ENCODE measurements at regions of chr1 and their contacts with region 1.

Region 1: DNA sequence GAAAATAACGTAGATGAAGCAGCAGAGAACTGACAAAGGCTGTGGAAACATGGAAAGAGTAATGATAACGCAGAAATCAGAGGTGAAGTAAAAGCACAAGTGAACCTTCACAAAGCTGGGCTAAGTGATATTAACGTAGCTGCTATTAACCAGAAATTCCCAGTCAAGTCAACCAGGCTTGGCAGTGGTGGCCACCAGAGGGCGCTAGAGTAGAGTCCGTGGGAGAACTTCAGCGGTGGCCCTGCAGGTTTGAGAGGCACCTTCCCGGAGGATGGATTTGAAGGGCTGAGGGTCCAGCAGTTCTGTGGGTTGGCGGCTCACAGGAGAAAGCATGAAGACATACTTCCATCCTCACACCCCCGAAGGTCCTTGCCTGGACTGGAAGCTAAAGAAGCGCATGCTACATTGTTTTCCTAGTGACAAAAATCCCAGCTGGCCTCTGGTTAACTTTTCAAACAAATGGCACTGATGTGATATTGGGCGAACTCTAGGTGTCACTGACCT is 81.7 kb upstream of the ZNF648 start:
- DNase-seq: peak; percentile 89
- ATAC-seq: peak; percentile 80
- H3K4me3 Mint-ChIP-seq: no peak overlapping the region
- H3K27ac Mint-ChIP-seq: no peak overlapping the region
- H3K4me1 Mint-ChIP-seq: peaks cover 26% of the 10 kb centered on the region
- H3K27me3 Mint-ChIP-seq: peaks cover 5% of the 10 kb centered on the region

Region 2: GRCh38 chr1:181969902-181970301 is 173.3 kb before region 1 on chr1:
- CTCF ChIA-PET with region 1: no interaction called
- POLR2A ChIA-PET with region 1: no interaction called
- DNase-seq: no peak
- ATAC-seq: no peak
- H3K4me3 Mint-ChIP-seq: no peak overlapping the region
- H3K27ac Mint-ChIP-seq: no peak overlapping the region
- H3K4me1 Mint-ChIP-seq: no peaks in the 10 kb centered on the region
- H3K27me3 Mint-ChIP-seq: peaks cover 2% of the 10 kb centered on the region

Region 3: DNA sequence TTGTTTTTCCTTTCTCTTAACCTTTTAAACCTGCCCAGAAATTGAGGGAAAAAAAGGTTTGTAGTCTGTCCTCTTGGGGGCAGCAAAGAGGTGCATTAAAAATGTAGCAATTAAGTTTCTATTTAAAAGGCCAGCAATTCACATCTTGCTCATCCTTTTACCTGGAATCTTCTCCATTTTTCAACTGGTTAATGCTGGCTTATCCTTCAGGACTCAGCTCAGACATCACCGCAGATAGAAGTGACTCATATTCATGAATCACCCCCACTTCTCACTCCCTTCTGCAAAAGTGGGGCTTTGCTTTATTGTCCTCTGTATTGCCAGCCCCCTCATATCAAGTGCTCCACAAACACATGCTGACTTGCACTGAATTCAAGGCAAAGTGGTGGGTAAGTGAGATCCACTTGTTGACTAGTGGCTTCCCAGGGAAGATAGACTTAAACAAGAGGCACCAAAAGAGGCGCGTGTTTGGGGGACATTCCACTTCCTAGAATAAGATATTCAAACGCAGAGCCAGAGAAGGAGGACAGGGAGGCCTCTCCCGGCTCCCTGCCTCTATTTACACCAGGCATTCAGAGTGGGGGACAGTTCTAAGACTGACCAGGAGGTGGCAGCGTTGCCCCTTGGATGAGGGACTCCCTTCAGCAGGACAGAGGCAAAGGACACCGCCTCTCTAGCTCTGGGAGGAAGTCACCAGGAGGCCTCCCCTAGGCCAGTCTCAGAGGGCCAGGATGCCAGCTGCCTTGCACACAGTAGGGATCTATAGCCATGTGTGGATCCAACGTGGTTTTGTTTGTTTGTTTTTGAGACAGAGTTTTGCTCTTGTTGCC is 58.5 kb before region 1 on chr1:
- CTCF ChIA-PET with region 1: interaction called, 50 read pairs
- POLR2A ChIA-PET with region 1: no interaction called
- DNase-seq: peak; percentile 89
- ATAC-seq: peak; percentile 86
- H3K4me3 Mint-ChIP-seq: no peak overlapping the region
- H3K27ac Mint-ChIP-seq: peak overlapping the region; percentile 70
- H3K4me1 Mint-ChIP-seq: peaks cover 54% of the 10 kb centered on the region
- H3K27me3 Mint-ChIP-seq: no peaks in the 10 kb centered on the region

Region 4: DNA sequence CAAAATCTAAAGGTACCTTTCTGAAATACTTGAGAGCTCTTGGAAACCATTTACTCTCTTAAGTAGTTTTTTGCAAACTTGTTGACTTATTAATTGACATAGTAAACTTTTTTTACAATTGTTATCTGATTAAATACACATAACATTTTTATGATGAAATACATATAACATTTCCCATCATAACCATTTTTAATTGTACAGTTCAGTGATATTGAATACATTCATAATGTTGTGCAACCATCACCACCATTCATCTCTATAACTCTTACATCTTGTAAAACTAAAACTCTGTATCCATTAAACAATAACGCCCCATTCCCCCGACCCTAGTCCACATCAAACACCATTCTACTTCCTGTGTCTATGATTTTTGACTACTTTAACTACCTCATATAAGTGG is 14.0 kb after region 1 on chr1:
- CTCF ChIA-PET with region 1: interaction called, 22 read pairs
- POLR2A ChIA-PET with region 1: no interaction called
- DNase-seq: no peak
- ATAC-seq: no peak
- H3K4me3 Mint-ChIP-seq: no peak overlapping the region
- H3K27ac Mint-ChIP-seq: no peak overlapping the region
- H3K4me1 Mint-ChIP-seq: peaks cover 15% of the 10 kb centered on the region
- H3K27me3 Mint-ChIP-seq: peaks cover 6% of the 10 kb centered on the region

Region 5: DNA sequence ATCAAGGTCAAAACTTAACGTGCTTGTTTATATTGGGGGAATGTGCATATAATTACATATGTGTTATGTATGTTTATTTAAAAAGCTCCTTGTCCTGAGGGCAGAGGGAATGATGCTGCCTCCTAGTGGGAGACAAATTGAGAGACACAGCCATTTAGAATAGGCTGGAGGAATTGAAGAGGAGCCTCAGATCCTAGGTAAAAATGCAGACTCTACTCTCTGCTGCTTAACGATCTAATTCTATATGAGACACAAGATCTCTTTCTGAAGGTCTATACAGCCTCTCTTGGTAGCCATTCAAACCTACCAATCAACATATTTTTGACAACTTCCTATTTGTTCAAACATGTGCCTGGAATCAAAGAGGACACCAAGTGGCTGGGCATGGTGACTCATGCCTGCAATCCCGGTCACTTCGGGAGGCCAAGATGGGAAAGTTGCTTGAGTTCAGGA is 54.9 kb after region 1 on chr1:
- CTCF ChIA-PET with region 1: interaction called, 10 read pairs
- POLR2A ChIA-PET with region 1: no interaction called
- DNase-seq: no peak
- ATAC-seq: no peak
- H3K4me3 Mint-ChIP-seq: no peak overlapping the region
- H3K27ac Mint-ChIP-seq: no peak overlapping the region
- H3K4me1 Mint-ChIP-seq: no peaks in the 10 kb centered on the region
- H3K27me3 Mint-ChIP-seq: peaks cover 3% of the 10 kb centered on the region

Region 6: GRCh38 chr1:182291584-182292192 is 148.5 kb after region 1 on chr1:
- CTCF ChIA-PET with region 1: interaction called, 10 read pairs
- POLR2A ChIA-PET with region 1: no interaction called
- DNase-seq: no peak
- ATAC-seq: no peak
- H3K4me3 Mint-ChIP-seq: no peak overlapping the region
- H3K27ac Mint-ChIP-seq: no peak overlapping the region
- H3K4me1 Mint-ChIP-seq: peaks cover 9% of the 10 kb centered on the region
- H3K27me3 Mint-ChIP-seq: no peaks in the 10 kb centered on the region

Region 7: DNA sequence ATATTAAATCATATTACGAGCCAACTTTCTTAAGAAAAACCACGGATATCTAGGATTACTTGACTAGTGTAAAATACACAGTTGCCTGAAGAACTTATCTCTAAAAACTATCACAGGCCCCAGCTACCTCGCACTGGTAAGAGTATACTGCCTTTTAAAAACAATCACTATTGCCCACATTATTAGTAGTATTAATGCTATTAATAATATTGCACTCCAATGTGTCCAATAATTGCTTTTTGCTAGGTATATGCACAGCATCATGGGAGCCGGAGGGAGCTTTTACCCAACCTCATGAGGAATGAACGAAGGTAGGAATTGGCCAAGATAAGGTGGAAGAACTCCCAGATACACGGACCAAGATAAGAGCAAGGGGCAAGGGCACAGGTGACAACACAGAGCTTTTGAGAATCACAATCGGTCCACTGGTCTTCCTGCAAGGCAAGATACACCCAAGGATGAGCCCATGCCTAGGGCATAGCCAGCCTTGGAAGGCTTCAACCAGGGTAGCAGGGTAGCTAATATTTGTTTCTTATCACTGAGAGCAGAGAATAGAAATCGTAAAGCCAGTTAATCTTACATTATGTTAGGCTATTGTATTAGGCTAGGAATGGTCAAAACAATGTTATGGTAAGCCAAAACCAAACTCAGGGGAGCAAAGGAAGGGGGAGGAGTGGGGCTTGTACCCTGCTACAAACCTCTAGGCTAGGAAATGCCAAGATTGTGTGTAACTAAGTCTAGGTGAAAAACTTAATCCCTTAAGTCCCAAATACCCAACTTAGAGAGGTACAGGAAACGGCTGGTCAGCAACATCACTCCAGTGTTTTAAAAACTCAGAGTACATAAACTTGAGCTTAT is 239.0 kb after region 1 on chr1:
- CTCF ChIA-PET with region 1: interaction called, 34 read pairs
- POLR2A ChIA-PET with region 1: no interaction called
- DNase-seq: no peak
- ATAC-seq: no peak
- H3K4me3 Mint-ChIP-seq: no peak overlapping the region
- H3K27ac Mint-ChIP-seq: no peak overlapping the region
- H3K4me1 Mint-ChIP-seq: no peaks in the 10 kb centered on the region
- H3K27me3 Mint-ChIP-seq: no peaks in the 10 kb centered on the region

Region 8: DNA sequence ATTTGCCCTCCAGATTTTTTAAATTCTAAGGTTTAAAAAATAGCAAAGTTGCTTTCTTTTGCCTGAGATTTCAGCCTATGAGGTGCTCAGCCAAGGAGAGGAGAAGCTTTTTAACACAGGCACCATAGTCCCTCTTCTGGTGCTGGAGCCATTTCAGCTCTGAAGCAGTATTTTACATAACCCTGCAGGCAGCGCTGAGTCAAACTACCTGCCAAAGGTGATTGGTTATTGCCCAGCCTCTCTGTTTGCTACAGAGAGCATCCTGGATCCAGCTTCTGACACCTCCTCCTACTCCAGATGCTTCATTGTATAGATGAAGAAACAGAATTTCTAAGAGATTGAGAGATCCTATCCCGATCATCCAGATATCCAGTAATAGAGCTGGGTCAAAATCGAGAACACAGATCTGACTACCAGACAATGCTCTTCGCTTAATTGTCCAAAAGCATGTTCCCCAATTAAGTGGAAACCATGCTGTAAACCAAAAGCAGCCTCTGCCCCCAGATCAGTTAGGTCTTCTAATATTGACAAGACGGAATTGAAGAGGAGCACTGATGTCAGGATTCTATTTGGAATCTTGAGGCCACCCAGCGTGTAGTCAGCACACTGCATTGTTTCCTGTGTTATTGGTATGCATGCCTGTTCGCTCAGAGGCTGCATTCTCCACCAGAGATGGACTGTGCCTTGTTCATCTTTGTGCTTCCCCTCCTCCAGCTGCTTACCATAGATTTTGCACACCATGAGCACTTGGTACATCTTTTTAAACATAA is 519.1 kb after region 1 on chr1:
- CTCF ChIA-PET with region 1: no interaction called
- POLR2A ChIA-PET with region 1: no interaction called
- DNase-seq: no peak
- ATAC-seq: no peak
- H3K4me3 Mint-ChIP-seq: no peak overlapping the region
- H3K27ac Mint-ChIP-seq: no peak overlapping the region
- H3K4me1 Mint-ChIP-seq: no peaks in the 10 kb centered on the region
- H3K27me3 Mint-ChIP-seq: peaks cover 43% of the 10 kb centered on the region

Measured in activated CD8-positive, alpha-beta T cell treated with anti-CD3 and anti-CD28 coated beads, Interleukin-2, amount 10 ng/mL, durations not matched to agents 7 days and 5 days (primary cell).